CD4-positive, alpha-beta T cell (primary cell): ENCODE measurements at regions of chr16 and their contacts with region 1.

Region 1: DNA sequence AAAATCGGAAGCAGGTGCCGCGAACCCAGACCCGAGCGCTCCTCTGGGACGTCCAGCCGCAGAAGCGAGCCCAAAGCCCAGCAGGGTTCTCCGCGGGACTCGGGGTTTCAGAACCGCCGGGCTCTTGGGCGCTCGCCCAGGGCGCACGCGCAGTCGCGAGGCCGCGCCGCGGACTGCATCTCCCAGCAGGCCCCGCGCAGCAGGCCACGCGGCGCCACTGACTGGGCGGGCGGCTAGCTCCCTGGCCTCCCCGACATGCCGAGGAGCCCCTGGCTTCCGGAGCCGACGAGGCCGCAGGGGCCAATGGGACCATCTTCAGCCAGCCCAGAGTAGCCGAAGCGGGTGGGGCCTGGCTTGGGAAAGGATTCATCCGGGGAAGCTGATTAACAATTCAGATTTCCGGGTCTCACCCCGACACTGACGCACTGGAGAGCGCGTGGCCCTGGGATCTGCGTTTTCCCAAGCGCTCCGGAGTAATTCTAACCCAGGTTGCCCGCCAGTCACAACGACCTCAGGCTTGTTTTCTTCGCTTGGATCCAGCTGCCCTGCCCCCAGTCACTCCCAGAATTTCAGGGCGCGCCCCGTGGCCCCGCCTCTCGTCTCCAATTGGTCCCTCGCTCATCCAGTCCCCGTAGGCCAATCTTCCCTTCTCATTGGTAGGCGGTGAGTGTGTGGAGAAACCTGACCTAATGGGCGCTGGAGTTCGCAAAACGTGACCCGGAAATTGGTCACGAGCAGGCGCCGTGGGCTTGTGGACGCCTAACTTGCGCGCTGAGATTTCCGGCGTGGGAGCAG is at the start of gene ZNF263:
- DNase-seq: peak; percentile 85 to 98 (median 90)
- ATAC-seq: peak; percentile 89
- H3K4me3 ChIP-seq: peak within 1 kb of the TSS; percentile 93
- H3K4me3 Mint-ChIP-seq: peak within 1 kb of the TSS; percentile 96
- H3K27ac ChIP-seq: peak within 1 kb of the TSS; percentile 89 to 100
- H3K27ac Mint-ChIP-seq: peak within 1 kb of the TSS; percentile 94
- H3K4me1 ChIP-seq: peaks cover 39% of the 10 kb centered on the region
- H3K4me1 Mint-ChIP-seq: peaks cover 42% of the 10 kb centered on the region
- H3K27me3 ChIP-seq: no peaks in the 10 kb centered on the region
- H3K27me3 Mint-ChIP-seq: no peaks in the 10 kb centered on the region
- CTCF ChIP-seq: no peak
- total RNA-seq, gene ZNF263: 35.3 to 39.4 TPM

Region 2: GRCh38 chr16:3182608-3183444 is 100.1 kb before region 1 on chr16:
- CTCF ChIA-PET with region 1: no interaction called
- POLR2A ChIA-PET with region 1: interaction called, 13 read pairs
- intact Hi-C with region 1: no loop called
- DNase-seq: peak in 8 of 14 experiments; percentile 16 to 75 (median 41)
- ATAC-seq: peak; percentile 45
- H3K4me3 ChIP-seq: peak overlapping the region; percentile 48
- H3K4me3 Mint-ChIP-seq: peak overlapping the region; percentile 82
- H3K27ac ChIP-seq: no peak overlapping the region
- H3K27ac Mint-ChIP-seq: no peak overlapping the region
- H3K4me1 ChIP-seq: peaks cover 27% of the 10 kb centered on the region
- H3K4me1 Mint-ChIP-seq: peaks cover 34% of the 10 kb centered on the region
- H3K27me3 ChIP-seq: peaks cover 65 to 72% of the 10 kb centered on the region in 2 experiments
- H3K27me3 Mint-ChIP-seq: peaks cover 91% of the 10 kb centered on the region
- CTCF ChIP-seq: peak; percentile 38

Region 3: GRCh38 chr16:3264137-3265036 is 18.5 kb before region 1 on chr16:
- CTCF ChIA-PET with region 1: interaction called, 4 read pairs
- POLR2A ChIA-PET with region 1: interaction called, 99 read pairs
- intact Hi-C with region 1: loop called (anchors 1 kb)
- DNase-seq: peak; percentile 92 to 98 (median 96)
- ATAC-seq: peak; percentile 85
- H3K4me3 ChIP-seq: peak overlapping the region; percentile 91
- H3K4me3 Mint-ChIP-seq: peak overlapping the region; percentile 92
- H3K27ac ChIP-seq: peak overlapping the region; percentile 95 to 96
- H3K27ac Mint-ChIP-seq: peak overlapping the region; percentile 96
- H3K4me1 ChIP-seq: peaks cover 47% of the 10 kb centered on the region
- H3K4me1 Mint-ChIP-seq: peaks cover 31% of the 10 kb centered on the region
- H3K27me3 ChIP-seq: no peaks in the 10 kb centered on the region
- H3K27me3 Mint-ChIP-seq: no peaks in the 10 kb centered on the region
- CTCF ChIP-seq: no peak

Region 4: DNA sequence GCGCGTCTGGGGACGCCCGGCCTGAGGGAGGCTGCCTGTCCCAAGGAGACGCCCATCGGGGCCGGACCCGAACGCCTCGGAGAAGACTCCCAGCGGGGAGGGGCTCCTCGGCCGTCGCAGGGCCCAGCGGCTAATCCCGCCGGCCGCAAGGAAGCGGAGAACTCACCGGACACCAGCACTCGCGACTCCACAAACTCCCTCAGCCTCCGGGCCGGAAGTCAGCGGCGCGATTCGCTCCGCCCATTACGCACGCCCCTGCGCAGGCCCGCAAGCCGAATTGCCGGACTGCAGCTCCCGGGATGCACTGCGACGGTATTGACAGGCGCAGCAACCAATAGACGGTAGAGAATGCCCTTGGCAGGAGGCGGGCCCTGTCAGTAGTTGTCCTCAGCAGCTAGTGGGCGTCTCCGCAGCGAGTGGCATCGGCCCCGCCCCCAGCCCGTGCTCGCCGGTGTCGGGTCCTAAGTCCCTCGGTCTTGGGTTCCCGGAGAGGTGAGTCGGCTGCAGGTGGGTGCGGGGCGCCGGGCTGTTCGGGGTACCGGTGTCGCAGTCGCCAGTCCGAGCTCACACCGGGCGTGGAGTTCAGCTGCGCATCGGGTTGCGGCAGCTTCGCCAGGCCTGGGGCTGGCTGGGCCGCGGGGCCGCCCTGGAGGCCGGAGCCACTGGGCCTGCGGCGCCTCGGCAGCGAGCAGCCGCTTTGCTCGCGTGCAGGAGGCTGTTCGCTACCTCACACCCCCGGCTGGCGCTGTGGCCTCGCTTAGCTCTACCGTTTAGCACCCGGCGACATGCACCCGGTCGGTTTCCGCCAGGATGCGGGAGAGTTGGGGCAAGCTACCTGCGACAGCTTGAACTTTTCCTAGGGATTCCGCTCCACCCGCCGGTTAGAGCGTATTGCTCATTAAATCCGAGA is 118.1 kb after region 1 on chr16 and contains the starts of genes ZNF174 and ZSCAN32:
- CTCF ChIA-PET with region 1: interaction called, 5 read pairs
- POLR2A ChIA-PET with region 1: interaction called, 60 read pairs
- intact Hi-C with region 1: loop called in 1 of 2 experiments (anchors 1 kb)
- DNase-seq: peak; percentile 96 to 99 (median 98)
- ATAC-seq: peak; percentile 97
- H3K4me3 ChIP-seq: peak within 1 kb of the TSS; percentile 83
- H3K4me3 Mint-ChIP-seq: peak within 1 kb of the TSS; percentile 95
- H3K27ac ChIP-seq: peak within 1 kb of the TSS; percentile 71 to 73
- H3K27ac Mint-ChIP-seq: peak within 1 kb of the TSS; percentile 88
- H3K4me1 ChIP-seq: peaks cover 49% of the 10 kb centered on the region
- H3K4me1 Mint-ChIP-seq: peaks cover 67% of the 10 kb centered on the region
- H3K27me3 ChIP-seq: no peaks in the 10 kb centered on the region
- H3K27me3 Mint-ChIP-seq: no peaks in the 10 kb centered on the region
- CTCF ChIP-seq: no peak
- total RNA-seq, gene ZNF174: 5.6 to 5.7 TPM
- total RNA-seq, gene ZSCAN32: 4.8 to 5.4 TPM

Region 5: DNA sequence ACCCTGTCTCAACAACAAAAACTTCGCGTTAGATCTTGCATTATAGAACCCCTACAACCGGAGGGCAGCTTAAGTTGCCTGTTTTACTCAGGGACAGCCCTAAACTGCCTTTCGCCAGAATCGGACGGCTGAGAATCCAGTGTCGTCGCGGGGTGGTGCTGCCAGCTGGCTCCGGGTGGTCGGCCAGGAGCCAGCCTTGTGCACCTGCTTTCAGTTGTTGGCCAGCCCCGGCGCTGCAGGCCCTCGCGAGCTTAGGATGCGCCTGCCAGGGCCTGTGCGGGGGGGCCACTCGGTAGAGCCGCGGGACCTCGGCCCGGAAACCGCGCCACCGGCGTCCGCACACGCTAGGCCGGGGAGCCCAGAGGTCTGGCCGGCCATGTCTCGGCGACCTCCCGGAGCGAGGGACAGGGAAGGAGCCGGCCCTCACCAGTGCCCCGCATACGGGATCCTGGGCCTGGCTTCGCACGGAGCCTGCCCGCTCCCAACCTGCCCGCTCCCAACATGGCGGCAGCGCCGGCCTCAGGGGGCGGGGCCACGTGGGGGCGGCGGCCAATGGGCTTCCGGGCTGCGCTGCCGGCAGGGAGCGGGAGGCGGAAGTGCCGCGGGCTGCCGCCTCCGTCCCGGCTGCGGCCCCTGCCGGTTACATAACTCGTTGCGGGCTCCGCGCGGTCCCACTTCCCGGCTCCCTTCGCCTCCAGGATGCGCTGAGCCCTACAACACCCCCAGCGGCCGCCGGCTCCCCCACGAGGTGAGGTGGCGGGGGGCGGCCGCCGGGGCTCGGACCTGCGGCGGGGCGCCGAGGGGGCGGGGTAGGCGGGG is 174.7 kb after region 1 on chr16:
- CTCF ChIA-PET with region 1: no interaction called
- POLR2A ChIA-PET with region 1: interaction called, 18 read pairs
- intact Hi-C with region 1: loop called (anchors 5 kb)
- DNase-seq: peak; percentile 74 to 97 (median 90)
- ATAC-seq: peak; percentile 86
- H3K4me3 ChIP-seq: peak overlapping the region; percentile 83
- H3K4me3 Mint-ChIP-seq: peak overlapping the region; percentile 76
- H3K27ac ChIP-seq: peak overlapping the region; percentile 84 to 90
- H3K27ac Mint-ChIP-seq: peak overlapping the region; percentile 83
- H3K4me1 ChIP-seq: peaks cover 46% of the 10 kb centered on the region
- H3K4me1 Mint-ChIP-seq: peaks cover 59% of the 10 kb centered on the region
- H3K27me3 ChIP-seq: no peaks in the 10 kb centered on the region
- H3K27me3 Mint-ChIP-seq: no peaks in the 10 kb centered on the region
- CTCF ChIP-seq: peak; percentile 39

Region 6: GRCh38 chr16:3681206-3681605 is 398.3 kb after region 1 on chr16:
- CTCF ChIA-PET with region 1: no interaction called
- POLR2A ChIA-PET with region 1: no interaction called
- intact Hi-C with region 1: no loop called
- DNase-seq: no peak
- ATAC-seq: no peak
- H3K4me3 ChIP-seq: no peak overlapping the region
- H3K4me3 Mint-ChIP-seq: no peak overlapping the region
- H3K27ac ChIP-seq: no peak overlapping the region
- H3K27ac Mint-ChIP-seq: no peak overlapping the region
- H3K4me1 ChIP-seq: no peaks in the 10 kb centered on the region
- H3K4me1 Mint-ChIP-seq: no peaks in the 10 kb centered on the region
- H3K27me3 ChIP-seq: no peaks in the 10 kb centered on the region
- H3K27me3 Mint-ChIP-seq: no peaks in the 10 kb centered on the region
- CTCF ChIP-seq: no peak